ENCODE measurements at regions of chr18 and their contacts with region 1.

Region 1: DNA sequence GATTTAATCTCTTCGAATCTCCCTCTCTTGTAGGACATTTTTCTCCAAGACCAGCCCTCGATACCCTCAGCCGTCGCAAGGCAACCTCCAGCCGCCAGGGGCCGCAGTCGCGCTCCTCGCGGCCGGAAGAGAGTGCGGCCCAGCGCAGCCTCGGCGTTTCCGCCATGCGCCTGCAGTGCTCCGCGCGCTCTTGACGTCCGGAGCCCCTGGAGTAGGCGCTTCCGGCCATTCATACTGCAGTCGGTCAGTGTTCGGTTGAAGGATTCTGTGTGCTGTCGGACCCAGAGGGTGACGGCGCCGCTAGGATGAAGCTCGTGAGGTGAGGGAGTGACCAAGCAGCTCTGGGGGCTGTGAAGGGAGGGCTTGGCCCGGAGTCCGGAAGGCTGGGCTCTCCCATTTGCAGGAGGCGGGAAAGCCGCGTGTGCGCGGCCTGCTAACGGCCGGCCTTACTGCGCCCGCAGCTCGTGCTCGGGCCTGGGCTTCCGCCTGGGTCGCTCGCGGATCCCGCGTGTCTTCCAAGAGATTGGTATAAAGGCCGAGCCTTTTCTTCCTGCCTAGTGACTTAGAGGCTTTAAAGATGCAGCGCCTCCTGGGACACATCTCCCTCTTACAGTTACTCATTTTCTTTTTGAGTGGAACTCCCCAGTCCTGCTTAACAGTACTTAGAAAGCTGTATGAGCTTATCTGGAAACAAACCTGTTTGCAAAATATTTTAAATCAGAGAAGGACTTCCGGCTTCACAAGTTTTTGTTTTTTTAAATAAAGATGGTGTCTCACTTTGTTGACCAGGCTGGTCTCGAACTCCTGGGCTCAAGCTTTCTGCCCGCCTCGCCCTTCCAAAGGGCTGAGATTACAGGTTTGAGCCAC is at the start of gene SNRPD1:
- DNase-seq: peak; percentile 96
- H3K4me3 ChIP-seq: peak within 1 kb of the TSS; percentile 67
- H3K27ac ChIP-seq: peak within 1 kb of the TSS; percentile 93
- H3K4me1 ChIP-seq: no peaks in the 10 kb centered on the region
- H3K27me3 ChIP-seq: no peaks in the 10 kb centered on the region
- CTCF ChIP-seq: peak; percentile 96
- total RNA-seq, gene SNRPD1: 164 and 167 TPM in 2 replicates

Region 2: GRCh38 chr18:21270453-21270852 is 341.9 kb before region 1 on chr18:
- CTCF ChIA-PET with region 1: no interaction called
- POLR2A ChIA-PET with region 1: no interaction called
- intact Hi-C with region 1: no loop called
- DNase-seq: no peak
- H3K4me3 ChIP-seq: no peak overlapping the region
- H3K27ac ChIP-seq: no peak overlapping the region
- H3K4me1 ChIP-seq: no peaks in the 10 kb centered on the region
- H3K27me3 ChIP-seq: no peaks in the 10 kb centered on the region
- CTCF ChIP-seq: no peak

Region 3: DNA sequence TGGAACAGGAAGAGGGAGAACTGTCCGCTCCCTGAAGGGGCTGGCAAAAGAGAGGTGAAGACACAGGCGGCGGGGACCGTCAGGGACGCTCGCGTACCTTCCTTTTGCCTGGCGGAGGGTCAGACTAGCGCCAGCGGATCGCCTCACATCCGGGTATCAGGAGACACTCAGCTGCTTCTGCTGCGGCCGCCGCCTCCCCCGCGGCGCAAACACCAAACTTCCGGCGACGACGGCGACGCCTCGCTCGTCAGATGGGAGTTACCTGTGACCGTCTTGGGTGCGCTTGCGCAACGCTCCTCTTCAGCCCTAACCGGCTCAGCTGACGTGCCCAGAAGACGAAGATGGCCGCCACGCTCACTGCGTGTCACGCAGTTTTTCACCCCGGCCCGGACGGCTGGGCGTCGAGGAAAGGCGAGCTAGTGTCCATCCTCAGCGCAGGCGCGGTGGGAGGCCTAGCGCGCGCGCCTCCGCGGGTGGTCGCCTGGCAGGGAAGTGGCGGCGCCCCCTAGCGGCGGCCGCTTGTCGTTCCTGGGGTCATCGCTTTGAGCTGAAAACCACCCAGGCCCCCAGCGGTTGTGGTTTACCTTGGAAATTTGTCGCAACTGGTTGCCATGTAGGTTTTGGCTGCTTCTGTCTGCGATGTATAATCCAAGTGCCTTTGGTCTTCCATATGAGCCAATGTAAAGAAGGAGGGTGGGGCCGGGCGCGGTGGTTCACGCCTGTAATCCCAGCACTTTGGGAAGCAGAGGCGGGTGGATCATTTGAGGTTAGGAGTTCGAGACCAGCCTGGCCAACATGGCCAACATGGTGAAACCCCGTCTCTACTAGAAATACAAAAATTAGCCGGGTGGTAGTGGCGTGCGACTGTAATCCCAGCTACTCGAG is 11.6 kb before region 1 on chr18 and contains the start of gene ESCO1:
- CTCF ChIA-PET with region 1: interaction called, 15 read pairs
- POLR2A ChIA-PET with region 1: no interaction called
- intact Hi-C with region 1: loop called (anchors 1 kb)
- DNase-seq: peak; percentile 96
- H3K4me3 ChIP-seq: peak within 1 kb of the TSS; percentile 97
- H3K27ac ChIP-seq: peak within 1 kb of the TSS; percentile 93
- H3K4me1 ChIP-seq: peaks cover 21% of the 10 kb centered on the region
- H3K27me3 ChIP-seq: no peaks in the 10 kb centered on the region
- CTCF ChIP-seq: peak; percentile 96
- total RNA-seq, gene ESCO1: 14.9 and 16.5 TPM in 2 replicates

Region 4: GRCh38 chr18:21704603-21705364 is 92.4 kb after region 1 on chr18 and contains the start of gene ABHD3:
- CTCF ChIA-PET with region 1: no interaction called
- POLR2A ChIA-PET with region 1: no interaction called
- intact Hi-C with region 1: loop called (anchors 5 kb)
- DNase-seq: peak; percentile 95
- H3K4me3 ChIP-seq: peak within 1 kb of the TSS; percentile 99
- H3K27ac ChIP-seq: peak within 1 kb of the TSS; percentile 97
- H3K4me1 ChIP-seq: peaks cover 7% of the 10 kb centered on the region
- H3K27me3 ChIP-seq: no peaks in the 10 kb centered on the region
- CTCF ChIP-seq: peak; percentile 22; the same call in 1 of the 2 replicates
- total RNA-seq, gene ABHD3: 45.4 and 47.5 TPM in 2 replicates

Region 5: DNA sequence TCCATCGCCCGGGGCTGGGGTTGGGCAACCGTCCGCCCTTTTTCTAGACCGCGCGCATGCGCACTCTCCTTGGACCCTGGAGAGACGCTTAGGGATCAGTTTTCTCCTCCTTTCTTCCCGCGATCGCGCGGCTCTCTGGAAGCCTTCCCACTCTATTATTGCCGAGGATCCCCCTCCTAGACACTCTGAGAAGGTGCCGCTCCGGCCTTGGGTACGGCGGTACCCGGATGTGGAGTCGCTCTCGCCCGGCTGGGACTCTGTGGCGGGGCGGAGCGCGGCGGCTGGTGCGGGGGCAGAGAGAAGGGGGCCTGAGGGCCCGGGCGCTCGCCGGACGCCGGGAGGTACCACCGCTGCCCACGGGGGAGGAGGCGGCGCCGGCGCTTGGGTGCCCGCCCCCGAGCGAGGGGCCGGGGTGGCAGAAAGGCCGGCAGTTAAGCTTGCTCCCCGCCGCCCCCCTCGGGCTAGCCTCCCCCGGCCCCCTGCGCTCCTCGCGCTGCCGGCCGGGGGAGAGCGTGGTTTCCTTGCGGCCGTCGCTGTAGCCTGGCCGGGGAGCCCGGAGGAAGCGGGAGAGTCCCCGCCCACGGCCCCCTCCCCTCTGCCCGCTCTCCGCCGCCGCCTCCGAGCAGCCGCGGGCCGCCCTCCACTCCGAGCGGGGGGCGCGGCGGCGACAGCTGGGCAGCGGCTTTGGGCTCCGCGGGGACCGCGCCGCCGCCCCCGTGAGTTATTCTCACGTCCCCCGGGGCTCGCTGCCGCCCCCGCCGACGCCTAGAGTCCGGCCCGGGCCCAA is 128.6 kb after region 1 on chr18 and contains the start of gene MIB1:
- CTCF ChIA-PET with region 1: no interaction called
- POLR2A ChIA-PET with region 1: no interaction called
- intact Hi-C with region 1: loop called (anchors 10 kb)
- DNase-seq: peak; percentile 99
- H3K4me3 ChIP-seq: peak within 1 kb of the TSS; percentile 92
- H3K27ac ChIP-seq: peak within 1 kb of the TSS; percentile 99
- H3K4me1 ChIP-seq: peaks cover 17% of the 10 kb centered on the region
- H3K27me3 ChIP-seq: no peaks in the 10 kb centered on the region
- CTCF ChIP-seq: no peak
- total RNA-seq, gene MIB1: 70.5 and 92.7 TPM in 2 replicates

Region 6: GRCh38 chr18:22032392-22032961 is 420.1 kb after region 1 on chr18:
- CTCF ChIA-PET with region 1: no interaction called
- POLR2A ChIA-PET with region 1: no interaction called
- intact Hi-C with region 1: loop called (anchors 10 kb)
- DNase-seq: peak; percentile 16
- H3K4me3 ChIP-seq: no peak overlapping the region
- H3K27ac ChIP-seq: no peak overlapping the region
- H3K4me1 ChIP-seq: no peaks in the 10 kb centered on the region
- H3K27me3 ChIP-seq: no peaks in the 10 kb centered on the region
- CTCF ChIP-seq: no peak